MCF 10A (cell line): ENCODE measurements at regions of chr20 and their contacts with region 1.

Region 1: DNA sequence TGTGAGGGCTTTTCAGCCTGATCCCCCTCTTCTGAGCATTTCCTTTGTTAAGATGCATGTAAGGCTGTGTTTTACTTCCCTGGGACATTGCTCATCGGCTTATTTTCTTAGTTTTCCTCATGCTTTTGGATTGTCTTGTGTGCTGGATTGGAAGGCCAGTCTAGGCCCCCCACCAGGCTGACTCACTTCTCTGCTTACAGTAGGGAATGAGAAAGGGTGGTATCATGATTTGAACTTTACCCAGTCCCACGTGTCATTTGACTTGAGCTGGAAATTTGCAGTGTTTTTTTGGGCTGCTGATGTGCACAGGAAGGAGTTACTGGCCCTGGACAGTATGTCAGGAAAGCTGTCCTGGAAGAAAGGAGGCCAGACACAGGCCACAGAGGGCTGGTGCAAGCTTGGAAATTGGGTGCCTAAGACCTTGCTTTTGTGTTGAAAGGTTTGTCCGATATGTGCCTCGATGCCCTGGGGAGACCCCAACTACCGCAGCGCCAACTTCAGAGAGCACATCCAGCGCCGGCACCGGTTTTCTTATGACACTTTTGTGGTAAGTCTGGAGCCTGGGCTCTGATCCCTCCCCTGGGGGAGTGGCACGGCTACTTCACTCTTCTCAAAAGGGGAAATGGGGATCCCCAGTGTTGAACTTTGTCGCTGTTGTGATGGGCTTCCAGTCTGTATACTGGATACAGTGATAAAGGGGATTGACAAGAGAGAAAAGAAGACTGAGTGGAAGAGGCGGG is 12.8 kb downstream of the RNF114 start:
- DNase-seq: no peak
- H3K4me3 Mint-ChIP-seq: no peak overlapping the region
- H3K27ac Mint-ChIP-seq: no peak overlapping the region
- H3K4me1 Mint-ChIP-seq: peaks cover 11% of the 10 kb centered on the region
- H3K27me3 Mint-ChIP-seq: no peaks in the 10 kb centered on the region
- CTCF ChIP-seq: no peak

Region 2: GRCh38 chr20:49615401-49616156 is 333.4 kb before region 1 on chr20:
- CTCF ChIA-PET with region 1: no interaction called
- POLR2A ChIA-PET with region 1: no interaction called
- intact Hi-C with region 1: no loop called
- DNase-seq: peak; percentile 64
- H3K4me3 Mint-ChIP-seq: no peak overlapping the region
- H3K27ac Mint-ChIP-seq: no peak overlapping the region
- H3K4me1 Mint-ChIP-seq: peaks cover 13% of the 10 kb centered on the region
- H3K27me3 Mint-ChIP-seq: no peaks in the 10 kb centered on the region
- CTCF ChIP-seq: no peak

Region 3: GRCh38 chr20:49901588-49901987 is 47.4 kb before region 1 on chr20:
- CTCF ChIA-PET with region 1: no interaction called
- POLR2A ChIA-PET with region 1: no interaction called
- intact Hi-C with region 1: no loop called
- DNase-seq: no peak
- H3K4me3 Mint-ChIP-seq: no peak overlapping the region
- H3K27ac Mint-ChIP-seq: no peak overlapping the region
- H3K4me1 Mint-ChIP-seq: peaks cover under 1% of the 10 kb centered on the region
- H3K27me3 Mint-ChIP-seq: no peaks in the 10 kb centered on the region
- CTCF ChIP-seq: no peak

Region 4: GRCh38 chr20:49936153-49937027 is 12.6 kb before region 1 on chr20 and contains the start of gene RNF114:
- CTCF ChIA-PET with region 1: interaction called, 5 read pairs
- POLR2A ChIA-PET with region 1: interaction called, 24 read pairs
- intact Hi-C with region 1: no loop called
- DNase-seq: peak; percentile 90
- H3K4me3 Mint-ChIP-seq: peak within 1 kb of the TSS; percentile 85
- H3K27ac Mint-ChIP-seq: peak within 1 kb of the TSS; percentile 69
- H3K4me1 Mint-ChIP-seq: peaks cover 23% of the 10 kb centered on the region
- H3K27me3 Mint-ChIP-seq: no peaks in the 10 kb centered on the region
- CTCF ChIP-seq: no peak
- total RNA-seq, gene RNF114: 40.0 and 48.6 TPM in 2 replicates